ENCODE measurements at regions of chr2 and their contacts with region 1.

Region 1: DNA sequence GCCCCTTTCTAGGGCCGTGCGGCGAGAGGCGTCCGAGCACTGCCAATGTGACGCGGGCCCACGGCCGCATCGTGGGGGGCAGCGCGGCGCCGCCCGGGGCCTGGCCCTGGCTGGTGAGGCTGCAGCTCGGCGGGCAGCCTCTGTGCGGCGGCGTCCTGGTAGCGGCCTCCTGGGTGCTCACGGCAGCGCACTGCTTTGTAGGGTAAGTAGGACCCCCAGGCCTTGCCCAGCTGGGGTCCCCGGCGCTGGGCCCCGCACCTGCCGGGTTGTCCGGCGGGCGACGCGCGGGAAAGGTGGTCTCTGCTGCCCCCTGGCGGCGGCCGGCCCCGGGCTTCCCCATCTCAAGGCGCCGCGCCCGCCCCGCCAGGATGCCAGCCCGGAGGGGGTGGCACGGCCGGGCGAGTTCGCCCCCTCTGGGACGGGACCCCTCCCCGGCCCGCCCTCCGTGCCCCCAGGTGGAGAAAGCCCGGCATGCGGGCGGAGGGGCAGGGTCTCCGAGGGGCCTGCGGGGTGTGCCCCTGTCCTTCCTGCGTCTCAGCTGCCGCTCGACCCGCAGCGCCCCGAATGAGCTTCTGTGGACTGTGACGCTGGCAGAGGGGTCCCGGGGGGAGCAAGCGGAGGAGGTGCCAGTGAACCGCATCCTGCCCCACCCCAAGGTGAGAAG is 1.9 kb downstream of the PRSS56 start:
- DNase-seq: peak in 1 of 2 experiments; percentile 94
- H3K4me3 ChIP-seq: peak overlapping the region in 3 of 4 experiments; percentile 23 to 55 (median 32); a peak in 6 of 8 replicates
- H3K27ac ChIP-seq: no peak overlapping the region
- H3K4me1 ChIP-seq: peaks cover 0 to 22% (median 9%) of the 10 kb centered on the region in 4 experiments; a peak in 6 of 7 replicates
- H3K27me3 ChIP-seq: peaks cover 19 to 43% (median 37%) of the 10 kb centered on the region in 4 experiments
- CTCF ChIP-seq: peak in 2 of 3 experiments; percentile 56 to 88; a peak in 3 of 4 replicates
- EP300 ChIP-seq: no peak
- POLR2A ChIP-seq: no peak
- RAD21 ChIP-seq: peak; percentile 79 to 90

Region 2: DNA sequence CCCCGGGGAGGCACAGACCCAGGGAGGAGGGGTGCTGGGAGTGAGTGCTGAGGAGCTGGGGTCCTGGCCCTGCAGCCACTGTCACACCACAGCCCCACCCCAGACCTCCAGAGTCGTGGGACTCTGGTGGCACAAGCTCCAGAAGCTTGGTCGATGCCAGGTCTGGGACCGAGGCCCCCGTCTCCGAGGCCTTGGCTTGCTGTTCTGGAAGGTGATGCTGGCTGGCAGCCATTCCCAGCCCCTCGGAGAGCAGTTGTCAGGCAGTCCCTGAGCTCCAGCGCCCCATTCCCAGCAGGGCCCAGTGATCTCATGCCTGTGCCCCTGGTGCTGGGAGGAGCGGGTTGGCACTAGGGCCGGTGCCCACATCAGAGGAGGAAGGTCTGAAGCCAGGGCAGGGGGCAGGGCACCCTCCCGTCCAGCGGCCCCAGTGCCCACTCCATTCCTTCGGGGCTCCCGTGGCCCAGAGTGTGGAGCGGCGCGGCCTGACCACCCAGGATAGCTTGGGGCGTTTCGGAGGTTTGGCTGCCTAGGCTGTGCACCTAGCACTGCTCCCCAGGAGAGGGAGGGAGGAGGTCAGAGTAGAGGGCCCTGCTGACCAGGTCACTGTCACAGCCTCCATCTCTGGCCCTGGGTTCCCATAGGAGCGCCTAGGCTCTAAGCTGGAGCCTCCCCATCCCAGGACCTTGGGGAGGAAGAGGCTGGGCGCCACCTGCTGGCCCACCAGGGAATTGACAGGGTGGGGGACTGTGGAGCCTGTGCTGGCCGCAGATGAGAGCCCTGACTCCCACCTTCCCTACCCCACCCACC is 82.9 kb before region 1 on chr2:
- CTCF ChIA-PET with region 1: interaction called, 46 read pairs
- POLR2A ChIA-PET with region 1: interaction called, 5 read pairs
- DNase-seq: peak in 1 of 2 experiments; percentile 71
- H3K4me3 ChIP-seq: no peak overlapping the region
- H3K27ac ChIP-seq: no peak overlapping the region
- H3K4me1 ChIP-seq: peaks cover 0 to 6% (median 4%) of the 10 kb centered on the region in 4 experiments; a peak in 6 of 7 replicates
- H3K27me3 ChIP-seq: peaks cover 0 to 2% (median 0%) of the 10 kb centered on the region in 4 experiments; a peak in 3 of 7 replicates
- CTCF ChIP-seq: peak in 2 of 3 experiments; percentile 22 to 28; a peak in 2 of 4 replicates
- EP300 ChIP-seq: no peak
- POLR2A ChIP-seq: no peak
- RAD21 ChIP-seq: peak; percentile 36 to 45

Region 3: DNA sequence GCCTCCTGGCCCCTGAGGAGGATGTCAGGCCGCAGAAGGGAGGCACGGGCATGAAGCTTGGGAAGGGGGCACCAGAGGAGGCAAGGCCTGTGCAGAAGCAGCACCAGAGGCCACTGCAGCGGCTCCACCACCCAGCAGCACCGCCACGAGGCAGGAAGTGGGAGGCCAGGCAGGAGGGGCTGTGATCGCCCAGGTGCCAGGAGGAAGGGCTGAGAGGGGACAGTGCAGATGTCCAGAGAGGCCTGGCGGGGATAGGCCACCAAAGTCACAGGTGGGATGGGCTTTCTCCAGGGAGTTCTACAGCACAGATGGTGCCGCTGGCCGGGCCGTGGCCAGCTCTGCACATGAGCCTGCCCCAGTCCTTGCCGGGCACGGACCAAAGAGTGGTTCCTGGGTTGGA is 72.1 kb before region 1 on chr2:
- CTCF ChIA-PET with region 1: interaction called, 108 read pairs
- POLR2A ChIA-PET with region 1: interaction called, 5 read pairs
- DNase-seq: no peak
- H3K4me3 ChIP-seq: no peak overlapping the region
- H3K27ac ChIP-seq: no peak overlapping the region
- H3K4me1 ChIP-seq: peaks cover 0 to 9% (median 0%) of the 10 kb centered on the region in 4 experiments; a peak in 2 of 7 replicates
- H3K27me3 ChIP-seq: no peaks in the 10 kb centered on the region
- CTCF ChIP-seq: peak in 2 of 3 experiments; percentile 6 to 17; a peak in 2 of 4 replicates
- EP300 ChIP-seq: no peak
- POLR2A ChIP-seq: no peak
- RAD21 ChIP-seq: no peak

Region 4: GRCh38 chr2:232463701-232464543 is 58.2 kb before region 1 on chr2:
- CTCF ChIA-PET with region 1: interaction called, 54 read pairs
- POLR2A ChIA-PET with region 1: interaction called, 3 read pairs
- DNase-seq: no peak
- H3K4me3 ChIP-seq: no peak overlapping the region
- H3K27ac ChIP-seq: no peak overlapping the region
- H3K4me1 ChIP-seq: peaks cover 0 to 2% (median 0%) of the 10 kb centered on the region in 4 experiments; a peak in 1 of 7 replicates
- H3K27me3 ChIP-seq: no peaks in the 10 kb centered on the region
- CTCF ChIP-seq: no peak
- EP300 ChIP-seq: no peak
- POLR2A ChIP-seq: no peak
- RAD21 ChIP-seq: no peak

Region 5: DNA sequence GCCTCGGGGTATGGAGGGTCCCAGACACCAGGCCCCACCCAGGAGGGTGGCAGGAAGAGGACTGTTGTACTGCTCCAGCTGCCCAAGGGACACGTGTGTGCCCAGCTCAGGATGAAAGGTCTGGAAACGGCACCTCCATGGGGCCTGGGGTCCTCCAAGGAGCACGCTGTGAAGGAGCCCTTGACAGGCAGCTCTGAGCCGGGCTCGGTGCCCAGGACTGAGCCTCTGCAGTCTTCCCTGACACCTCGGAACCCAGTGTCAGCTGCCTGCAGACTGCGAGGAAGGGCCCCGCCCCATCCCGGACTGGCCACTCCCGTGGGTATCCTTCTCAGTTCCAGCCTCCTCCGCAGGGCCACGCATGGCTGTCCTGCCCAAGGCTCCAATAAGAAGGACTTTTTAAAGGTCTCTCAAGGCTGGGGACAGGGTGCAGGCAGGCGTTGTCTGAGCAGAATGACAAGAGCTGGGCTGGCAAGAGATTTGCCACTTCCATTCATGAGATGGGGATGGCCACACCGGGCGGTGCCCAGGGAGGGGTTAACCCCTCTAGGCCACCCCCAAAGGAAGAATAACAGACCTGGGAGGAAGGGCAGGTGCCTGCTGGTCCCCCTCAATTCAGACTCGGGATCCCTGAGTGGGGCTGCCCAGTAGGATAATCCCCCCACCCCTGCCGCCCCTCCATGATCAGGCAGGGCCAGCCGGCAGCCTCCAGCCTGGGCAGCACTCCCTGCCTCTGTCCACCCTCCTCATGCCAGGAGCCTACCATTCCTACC is 43.3 kb before region 1 on chr2:
- CTCF ChIA-PET with region 1: interaction called, 24 read pairs
- POLR2A ChIA-PET with region 1: no interaction called
- DNase-seq: no peak
- H3K4me3 ChIP-seq: no peak overlapping the region
- H3K27ac ChIP-seq: no peak overlapping the region
- H3K4me1 ChIP-seq: no peaks in the 10 kb centered on the region; a peak in 1 of 7 replicates
- H3K27me3 ChIP-seq: peaks cover 0 to 4% (median 0%) of the 10 kb centered on the region in 4 experiments; a peak in 3 of 7 replicates
- CTCF ChIP-seq: no peak
- EP300 ChIP-seq: no peak
- POLR2A ChIP-seq: no peak
- RAD21 ChIP-seq: no peak

Region 6: GRCh38 chr2:232497348-232497747 is 24.7 kb before region 1 on chr2:
- CTCF ChIA-PET with region 1: interaction called, 13 read pairs
- POLR2A ChIA-PET with region 1: interaction called, 4 read pairs
- DNase-seq: no peak
- H3K4me3 ChIP-seq: no peak overlapping the region
- H3K27ac ChIP-seq: no peak overlapping the region
- H3K4me1 ChIP-seq: peaks cover 0 to 30% (median 5%) of the 10 kb centered on the region in 4 experiments; a peak in 6 of 7 replicates
- H3K27me3 ChIP-seq: peaks cover 0 to 9% (median 3%) of the 10 kb centered on the region in 4 experiments; a peak in 5 of 7 replicates
- CTCF ChIP-seq: no peak
- EP300 ChIP-seq: no peak
- POLR2A ChIP-seq: no peak
- RAD21 ChIP-seq: no peak

Region 7: GRCh38 chr2:232537079-232537478 is 15.0 kb after region 1 on chr2:
- CTCF ChIA-PET with region 1: interaction called, 29 read pairs
- POLR2A ChIA-PET with region 1: interaction called, 5 read pairs
- DNase-seq: peak in 1 of 2 experiments; percentile 80
- H3K4me3 ChIP-seq: no peak overlapping the region
- H3K27ac ChIP-seq: no peak overlapping the region
- H3K4me1 ChIP-seq: peaks cover 0 to 18% (median 11%) of the 10 kb centered on the region in 4 experiments; a peak in 6 of 7 replicates
- H3K27me3 ChIP-seq: no peaks in the 10 kb centered on the region
- CTCF ChIP-seq: peak in 2 of 3 experiments; percentile 97 to 99; a peak in 3 of 4 replicates
- EP300 ChIP-seq: no peak
- POLR2A ChIP-seq: no peak
- RAD21 ChIP-seq: peak; percentile 50 to 68

Region 8: GRCh38 chr2:232556426-232556825 is 34.3 kb after region 1 on chr2:
- CTCF ChIA-PET with region 1: no interaction called
- POLR2A ChIA-PET with region 1: no interaction called
- DNase-seq: no peak
- H3K4me3 ChIP-seq: no peak overlapping the region
- H3K27ac ChIP-seq: no peak overlapping the region
- H3K4me1 ChIP-seq: peaks cover 0 to 5% (median 4%) of the 10 kb centered on the region in 4 experiments; a peak in 6 of 7 replicates
- H3K27me3 ChIP-seq: no peaks in the 10 kb centered on the region
- CTCF ChIP-seq: no peak
- EP300 ChIP-seq: no peak
- POLR2A ChIP-seq: no peak
- RAD21 ChIP-seq: no peak

Region 9: DNA sequence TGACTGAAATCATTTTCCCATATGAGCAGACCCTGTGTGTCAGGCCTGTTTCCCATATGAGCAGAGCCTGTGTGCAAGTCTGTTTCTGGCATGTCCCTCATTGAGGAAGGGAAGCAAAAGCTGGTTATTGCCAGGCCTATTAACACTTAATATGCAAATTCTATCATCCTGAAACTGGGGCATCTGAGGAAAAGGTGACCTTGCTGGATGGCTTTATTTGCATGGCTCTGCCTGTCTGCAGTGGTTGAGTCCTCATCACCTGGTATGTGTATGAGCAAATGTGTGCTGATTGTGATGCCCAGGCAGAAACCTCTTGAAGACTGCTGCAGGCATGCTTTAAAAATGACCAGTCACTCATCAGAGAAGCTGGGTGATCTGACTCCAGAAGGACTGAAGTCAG is 59.6 kb after region 1 on chr2:
- CTCF ChIA-PET with region 1: no interaction called
- POLR2A ChIA-PET with region 1: no interaction called
- DNase-seq: no peak
- H3K4me3 ChIP-seq: no peak overlapping the region
- H3K27ac ChIP-seq: no peak overlapping the region
- H3K4me1 ChIP-seq: no peaks in the 10 kb centered on the region
- H3K27me3 ChIP-seq: no peaks in the 10 kb centered on the region
- CTCF ChIP-seq: no peak
- EP300 ChIP-seq: no peak
- POLR2A ChIP-seq: no peak
- RAD21 ChIP-seq: no peak

Measured in H1 (cell line).